Panc1 (cell line): ENCODE measurements at regions of chr10 and their contacts with region 1.

Region 1: DNA sequence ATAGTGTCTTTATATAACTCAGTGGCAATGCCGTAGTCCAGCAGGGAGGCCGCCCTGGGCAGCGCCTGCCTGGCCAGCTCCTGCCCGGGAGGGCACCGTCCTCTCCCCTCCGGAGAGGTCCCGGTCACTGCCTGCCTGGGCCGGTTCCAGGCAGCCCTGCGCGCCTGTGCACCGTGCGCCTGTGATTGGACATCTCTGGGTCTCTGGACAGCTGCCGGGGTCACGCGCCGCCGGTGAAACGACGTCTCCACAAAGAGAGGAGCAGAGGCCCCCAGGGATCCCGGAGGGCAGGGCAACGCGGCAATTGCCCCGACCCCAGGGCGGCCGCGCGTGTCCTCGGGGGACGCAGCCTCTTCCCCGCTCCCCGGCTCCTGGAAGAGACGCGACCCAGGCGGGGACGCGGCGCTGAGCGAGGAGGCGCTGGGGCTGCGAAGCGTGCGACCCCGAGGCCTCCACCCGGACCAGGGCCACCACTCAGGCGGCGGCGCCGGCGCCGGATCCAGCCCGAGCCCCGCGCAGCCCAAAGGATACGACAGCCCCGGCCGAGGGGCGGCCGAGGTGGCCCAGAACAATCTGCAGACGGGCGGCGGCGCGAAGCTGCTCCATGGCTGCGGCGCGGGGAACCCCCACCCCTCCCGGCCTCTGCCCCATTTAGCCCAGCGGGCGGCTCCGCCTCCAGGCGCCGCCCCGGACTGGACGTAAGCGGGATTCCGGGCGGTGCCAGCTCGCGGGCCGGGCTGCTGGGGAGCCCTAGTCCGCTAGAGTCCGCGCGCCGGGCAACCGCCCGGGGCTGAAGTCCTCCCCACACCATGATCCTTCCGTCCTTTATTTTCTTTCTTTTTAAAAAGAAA is at the start of gene PHYH:
- DNase-seq: no peak
- ATAC-seq: peak; percentile 90
- H3K4me3 ChIP-seq: peak within 1 kb of the TSS; percentile 63 to 67
- H3K27ac ChIP-seq: peak within 1 kb of the TSS; percentile 85
- H3K4me1 ChIP-seq: no peaks in the 10 kb centered on the region
- H3K27me3 ChIP-seq: no peaks in the 10 kb centered on the region
- CTCF ChIP-seq: no peak
- total RNA-seq, gene PHYH: 41.3 TPM

Region 2: GRCh38 chr10:13120786-13121499 is 178.7 kb before region 1 on chr10:
- CTCF ChIA-PET with region 1: interaction called, 12 read pairs
- POLR2A ChIA-PET with region 1: no interaction called
- in situ Hi-C with region 1: no loop called
- intact Hi-C with region 1: no loop called
- DNase-seq: no peak
- ATAC-seq: no peak
- H3K4me3 ChIP-seq: no peak overlapping the region
- H3K27ac ChIP-seq: no peak overlapping the region
- H3K4me1 ChIP-seq: no peaks in the 10 kb centered on the region
- H3K27me3 ChIP-seq: no peaks in the 10 kb centered on the region
- CTCF ChIP-seq: no peak

Region 3: GRCh38 chr10:13160934-13161856 is 138.5 kb before region 1 on chr10 and contains the start of gene MCM10:
- CTCF ChIA-PET with region 1: interaction called, 5 read pairs
- POLR2A ChIA-PET with region 1: interaction called, 3 read pairs
- in situ Hi-C with region 1: no loop called
- intact Hi-C with region 1: loop called (anchors 2 kb)
- DNase-seq: peak; percentile 92
- ATAC-seq: peak; percentile 100
- H3K4me3 ChIP-seq: peak within 1 kb of the TSS; percentile 69 to 81
- H3K27ac ChIP-seq: peak within 1 kb of the TSS; percentile 83
- H3K4me1 ChIP-seq: peaks cover 9% of the 10 kb centered on the region; the same call in 1 of the 2 replicates
- H3K27me3 ChIP-seq: no peaks in the 10 kb centered on the region
- CTCF ChIP-seq: peak; percentile 86
- total RNA-seq, gene MCM10: 22.8 TPM

Region 4: DNA sequence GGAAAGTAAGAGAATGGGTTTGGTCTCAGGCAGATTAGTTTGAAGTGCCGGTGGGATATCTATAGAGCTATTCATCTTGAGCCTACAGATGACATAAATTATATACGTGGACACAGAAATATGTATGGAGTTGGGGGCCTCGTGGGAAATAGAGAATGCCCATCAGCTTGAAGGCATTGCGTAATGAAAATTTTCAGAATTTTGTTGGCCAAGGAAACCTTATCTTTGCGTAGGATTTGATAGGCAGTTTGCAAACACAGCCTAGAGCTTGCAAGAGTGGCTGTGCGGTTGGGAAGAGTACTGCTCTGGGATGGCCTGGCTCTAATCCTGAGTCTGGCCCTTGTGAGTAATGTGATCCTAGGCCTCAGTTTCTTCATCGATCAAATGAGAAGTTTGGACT is 106.0 kb before region 1 on chr10:
- CTCF ChIA-PET with region 1: no interaction called
- POLR2A ChIA-PET with region 1: interaction called, 10 read pairs
- in situ Hi-C with region 1: no loop called
- intact Hi-C with region 1: no loop called
- DNase-seq: no peak
- ATAC-seq: no peak
- H3K4me3 ChIP-seq: no peak overlapping the region
- H3K27ac ChIP-seq: no peak overlapping the region
- H3K4me1 ChIP-seq: no peaks in the 10 kb centered on the region
- H3K27me3 ChIP-seq: no peaks in the 10 kb centered on the region
- CTCF ChIP-seq: no peak

Region 5: GRCh38 chr10:13219685-13220670 is 79.7 kb before region 1 on chr10:
- CTCF ChIA-PET with region 1: interaction called, 3 read pairs
- POLR2A ChIA-PET with region 1: interaction called, 8 read pairs
- in situ Hi-C with region 1: no loop called
- intact Hi-C with region 1: loop called (anchors 5 kb)
- DNase-seq: peak; percentile 27
- ATAC-seq: peak; percentile 94
- H3K4me3 ChIP-seq: peak overlapping the region; percentile 1 to 13; a peak in 2 of 4 replicates
- H3K27ac ChIP-seq: 0 out of 2 replicates have a peak overlapping the region, but pooled peaks have one; percentile 4
- H3K4me1 ChIP-seq: peaks cover 10% of the 10 kb centered on the region; the same call in 1 of the 2 replicates
- H3K27me3 ChIP-seq: no peaks in the 10 kb centered on the region
- CTCF ChIP-seq: peak; percentile 58; the same call in 1 of the 2 replicates